ENCODE measurements at regions of chr7 and their contacts with region 1.

Region 1: GRCh38 chr7:89385411-89385810 is 589.9 kb upstream of the TEX47 start:
- DNase-seq: no peak
- H3K4me3 ChIP-seq: no peak overlapping the region
- H3K27ac ChIP-seq: no peak overlapping the region
- H3K4me1 ChIP-seq: no peaks in the 10 kb centered on the region
- H3K27me3 ChIP-seq: no peaks in the 10 kb centered on the region
- CTCF ChIP-seq: no peak
- EP300 ChIP-seq: no peak
- POLR2A ChIP-seq: no peak

Region 2: DNA sequence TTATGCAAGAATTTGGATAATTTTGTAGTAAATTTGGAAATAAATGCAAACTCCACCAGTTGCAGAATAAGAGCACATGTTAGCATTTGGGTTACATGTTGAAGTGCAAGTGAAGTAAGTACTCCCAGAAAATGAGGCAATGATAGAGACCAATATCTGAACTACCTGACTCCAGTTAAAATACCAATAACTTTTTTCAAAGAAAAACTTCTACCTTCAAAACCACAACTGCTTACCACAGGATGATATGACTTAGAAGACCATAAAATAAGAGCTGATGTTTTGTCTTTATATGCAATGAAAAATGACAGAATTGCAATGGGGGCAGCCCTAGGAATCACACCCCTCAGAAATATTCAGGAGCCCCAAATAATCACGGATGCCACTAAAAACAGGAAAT is 28.3 kb before region 1 on chr7:
- intact Hi-C with region 1: loop called in 1 of 4 experiments (anchors 1 kb)
- DNase-seq: no peak
- H3K4me3 ChIP-seq: no peak overlapping the region
- H3K27ac ChIP-seq: no peak overlapping the region
- H3K4me1 ChIP-seq: no peaks in the 10 kb centered on the region
- H3K27me3 ChIP-seq: no peaks in the 10 kb centered on the region
- CTCF ChIP-seq: no peak
- EP300 ChIP-seq: no peak
- POLR2A ChIP-seq: no peak

Measured in ovary (tissue), 10 donors.